PC-9 (cell line): ENCODE measurements at regions of chrX and their contacts with region 1.

Region 1: GRCh38 chrX:30283431-30284200 is 25.6 kb downstream of the NR0B1 start:
- DNase-seq: peak; percentile 29 to 85
- H3K4me3 ChIP-seq: no peak overlapping the region
- H3K27ac ChIP-seq: peak overlapping the region; percentile 99
- H3K4me1 ChIP-seq: peaks cover 28% of the 10 kb centered on the region
- H3K27me3 ChIP-seq: no peaks in the 10 kb centered on the region
- CTCF ChIP-seq: no peak

Region 2: DNA sequence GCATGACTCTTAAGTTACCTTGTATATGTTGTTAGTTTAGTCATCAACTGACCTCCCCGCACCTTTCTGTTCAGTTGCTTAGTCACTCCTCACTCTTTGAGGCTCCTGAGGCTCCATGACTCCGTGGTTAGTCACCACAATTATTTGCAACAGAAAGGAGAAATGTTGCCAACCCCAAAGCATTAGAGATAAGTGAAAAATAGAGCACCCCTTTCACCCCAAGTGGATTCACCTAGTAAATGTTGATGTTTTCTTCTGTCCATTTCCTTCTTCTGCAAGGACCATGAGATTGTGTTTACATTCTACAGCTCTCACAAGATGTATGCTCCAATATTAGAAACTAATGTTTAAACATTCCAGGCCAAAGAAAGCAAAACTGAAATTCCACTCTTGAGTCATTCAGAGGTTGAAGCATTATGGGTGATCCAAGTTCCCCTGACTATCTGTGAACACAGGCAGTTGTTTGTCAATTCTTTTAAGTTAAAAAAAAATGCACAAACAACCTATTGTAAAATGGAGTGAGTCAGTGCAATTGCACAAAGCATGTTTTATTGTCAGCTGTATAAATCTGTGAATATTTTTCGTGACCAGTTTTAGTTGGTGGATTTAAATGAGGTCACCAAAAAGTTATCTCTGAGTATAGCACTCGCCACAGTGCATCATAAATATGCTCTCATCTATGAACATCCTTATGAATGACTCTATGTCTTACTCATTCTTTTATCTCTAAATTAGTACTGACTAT is 620.7 kb before region 1 on chrX:
- CTCF ChIA-PET with region 1: no interaction called
- POLR2A ChIA-PET with region 1: no interaction called
- intact Hi-C with region 1: loop called (anchors 1 kb)
- DNase-seq: peak; percentile 63 to 90
- H3K4me3 ChIP-seq: peak overlapping the region; percentile 14; the same call in 1 of the 2 replicates
- H3K27ac ChIP-seq: peak overlapping the region; percentile 92
- H3K4me1 ChIP-seq: peaks cover 29% of the 10 kb centered on the region
- H3K27me3 ChIP-seq: no peaks in the 10 kb centered on the region
- CTCF ChIP-seq: no peak

Region 3: GRCh38 chrX:30153881-30154260 is 129.7 kb before region 1 on chrX:
- CTCF ChIA-PET with region 1: no interaction called
- POLR2A ChIA-PET with region 1: no interaction called
- intact Hi-C with region 1: loop called (anchors 1 kb)
- DNase-seq: no peak
- H3K4me3 ChIP-seq: no peak overlapping the region
- H3K27ac ChIP-seq: no peak overlapping the region
- H3K4me1 ChIP-seq: peaks cover 14% of the 10 kb centered on the region
- H3K27me3 ChIP-seq: no peaks in the 10 kb centered on the region
- CTCF ChIP-seq: no peak

Region 4: GRCh38 chrX:30302957-30303356 is 19.3 kb after region 1 on chrX:
- CTCF ChIA-PET with region 1: interaction called, 4 read pairs
- POLR2A ChIA-PET with region 1: interaction called, 5 read pairs
- intact Hi-C with region 1: loop called (anchors 1 kb)
- DNase-seq: peak in 1 of 2 experiments; percentile 71
- H3K4me3 ChIP-seq: no peak overlapping the region
- H3K27ac ChIP-seq: no peak overlapping the region
- H3K4me1 ChIP-seq: no peaks in the 10 kb centered on the region; the same call in 1 of the 2 replicates
- H3K27me3 ChIP-seq: no peaks in the 10 kb centered on the region
- CTCF ChIP-seq: no peak

Region 5: GRCh38 chrX:30308263-30309138 is 24.9 kb after region 1 on chrX:
- CTCF ChIA-PET with region 1: interaction called, 10 read pairs
- POLR2A ChIA-PET with region 1: interaction called, 5 read pairs
- intact Hi-C with region 1: loop called (anchors 1 kb)
- DNase-seq: peak in 1 of 2 experiments; percentile 66
- H3K4me3 ChIP-seq: no peak overlapping the region
- H3K27ac ChIP-seq: no peak overlapping the region
- H3K4me1 ChIP-seq: no peaks in the 10 kb centered on the region
- H3K27me3 ChIP-seq: no peaks in the 10 kb centered on the region
- CTCF ChIP-seq: no peak